CD8-positive, alpha-beta T cell (primary cell): ENCODE measurements at regions of chr7 and their contacts with region 1.

Region 1: DNA sequence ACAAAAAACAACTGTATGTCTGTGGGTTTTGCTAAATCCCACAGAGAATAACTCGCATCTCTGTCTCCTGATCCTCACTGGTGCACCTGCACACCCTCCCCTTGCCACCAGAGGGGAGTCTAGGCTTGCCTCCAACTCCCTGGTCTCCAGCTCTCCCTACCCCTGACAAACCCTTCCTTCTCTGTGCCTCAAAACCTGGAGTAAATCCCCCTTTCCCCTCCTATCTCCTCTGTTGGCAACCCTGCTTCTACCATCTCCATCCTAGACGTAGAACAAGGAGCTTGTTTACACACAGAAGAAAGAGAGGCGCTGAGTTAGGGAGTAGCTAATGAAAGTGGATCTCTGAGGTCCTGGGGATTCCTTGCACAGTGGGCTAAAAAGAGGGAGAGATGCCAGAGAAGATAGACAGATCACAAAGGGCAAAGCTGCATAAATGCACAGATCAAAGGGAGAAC is 6.0 kb downstream of the MBLAC1 start:
- DNase-seq: peak; percentile 28 to 81 (median 71)
- ATAC-seq: peak; percentile 77
- H3K4me3 ChIP-seq: no peak overlapping the region
- H3K4me3 Mint-ChIP-seq: no peak overlapping the region
- H3K27ac ChIP-seq: no peak overlapping the region
- H3K27ac Mint-ChIP-seq: no peak overlapping the region
- H3K4me1 ChIP-seq: peaks cover 14% of the 10 kb centered on the region
- H3K4me1 Mint-ChIP-seq: peaks cover 16% of the 10 kb centered on the region
- H3K27me3 ChIP-seq: no peaks in the 10 kb centered on the region
- H3K27me3 Mint-ChIP-seq: no peaks in the 10 kb centered on the region
- CTCF ChIP-seq: peak; percentile 87

Region 2: GRCh38 chr7:99910976-99911375 is 221.7 kb before region 1 on chr7:
- CTCF ChIA-PET with region 1: interaction called, 41 read pairs
- POLR2A ChIA-PET with region 1: no interaction called
- intact Hi-C with region 1: loop called in 1 of 2 experiments (anchors 2 kb)
- DNase-seq: no peak
- ATAC-seq: no peak
- H3K4me3 ChIP-seq: no peak overlapping the region
- H3K4me3 Mint-ChIP-seq: no peak overlapping the region
- H3K27ac ChIP-seq: no peak overlapping the region
- H3K27ac Mint-ChIP-seq: no peak overlapping the region
- H3K4me1 ChIP-seq: peaks cover 19% of the 10 kb centered on the region
- H3K4me1 Mint-ChIP-seq: peaks cover 63% of the 10 kb centered on the region
- H3K27me3 ChIP-seq: no peaks in the 10 kb centered on the region
- H3K27me3 Mint-ChIP-seq: no peaks in the 10 kb centered on the region
- CTCF ChIP-seq: no peak

Region 3: GRCh38 chr7:99997545-99998137 is 135.1 kb before region 1 on chr7:
- CTCF ChIA-PET with region 1: interaction called, 48 read pairs
- POLR2A ChIA-PET with region 1: interaction called, 3 read pairs
- intact Hi-C with region 1: loop called (anchors 1 to 2 kb)
- DNase-seq: peak; percentile 51 to 91 (median 74)
- ATAC-seq: peak; percentile 88
- H3K4me3 ChIP-seq: peak overlapping the region; percentile 48 to 54
- H3K4me3 Mint-ChIP-seq: peak overlapping the region; percentile 73
- H3K27ac ChIP-seq: peak overlapping the region; percentile 64 to 82
- H3K27ac Mint-ChIP-seq: peak overlapping the region; percentile 92
- H3K4me1 ChIP-seq: peaks cover 12% of the 10 kb centered on the region
- H3K4me1 Mint-ChIP-seq: peaks cover 11% of the 10 kb centered on the region
- H3K27me3 ChIP-seq: no peaks in the 10 kb centered on the region
- H3K27me3 Mint-ChIP-seq: no peaks in the 10 kb centered on the region
- CTCF ChIP-seq: no peak

Region 4: GRCh38 chr7:100107125-100107737 is 25.5 kb before region 1 on chr7:
- CTCF ChIA-PET with region 1: interaction called, 18 read pairs
- POLR2A ChIA-PET with region 1: interaction called, 3 read pairs
- intact Hi-C with region 1: no loop called
- DNase-seq: no peak
- ATAC-seq: no peak
- H3K4me3 ChIP-seq: no peak overlapping the region
- H3K4me3 Mint-ChIP-seq: no peak overlapping the region
- H3K27ac ChIP-seq: no peak overlapping the region
- H3K27ac Mint-ChIP-seq: no peak overlapping the region
- H3K4me1 ChIP-seq: peaks cover 3% of the 10 kb centered on the region
- H3K4me1 Mint-ChIP-seq: peaks cover 6% of the 10 kb centered on the region
- H3K27me3 ChIP-seq: no peaks in the 10 kb centered on the region
- H3K27me3 Mint-ChIP-seq: no peaks in the 10 kb centered on the region
- CTCF ChIP-seq: no peak

Region 5: DNA sequence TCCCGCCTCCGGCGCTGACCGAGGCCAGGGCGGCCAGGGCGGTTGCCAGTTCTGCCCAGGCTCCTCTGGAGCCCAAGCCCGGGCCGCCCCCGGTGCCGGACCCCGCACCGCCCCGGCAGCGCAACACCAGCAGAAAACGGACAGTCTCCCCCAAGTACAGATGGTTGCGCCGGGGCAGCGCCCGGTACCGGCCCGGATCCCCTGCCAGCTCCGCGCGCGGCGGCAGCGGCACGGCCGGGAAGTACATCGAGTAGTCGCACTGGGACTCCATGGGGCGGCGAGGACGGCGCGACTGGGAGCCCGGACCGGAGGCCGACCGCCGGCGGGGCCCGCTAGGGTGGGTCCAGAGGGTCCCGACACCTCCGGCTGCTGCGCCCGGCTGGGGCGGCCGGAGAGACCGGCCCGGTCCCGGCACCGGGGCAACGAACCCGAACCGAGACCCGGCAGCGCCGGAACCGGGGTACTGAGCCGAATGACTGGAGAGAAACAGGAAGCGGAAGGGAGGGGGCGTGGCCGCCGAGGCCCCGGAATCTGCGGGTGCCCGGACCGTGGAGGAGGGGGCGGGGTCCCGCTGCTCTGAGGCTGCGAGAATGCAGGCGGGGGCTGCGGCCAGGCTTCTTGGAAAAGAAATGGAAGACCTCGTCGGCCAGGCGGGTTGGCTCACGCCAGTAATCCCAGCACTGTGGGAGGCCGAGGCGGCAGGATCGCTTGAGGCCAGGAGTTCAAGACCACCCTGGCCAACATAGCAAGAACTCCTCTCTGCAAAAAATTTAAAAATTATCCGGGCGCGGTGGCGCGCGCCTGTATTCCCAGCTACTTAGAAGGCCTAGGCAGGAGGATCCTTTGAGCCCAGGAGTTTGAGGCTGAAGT is 25.7 kb after region 1 on chr7 and contains the start of gene TRAPPC14:
- CTCF ChIA-PET with region 1: interaction called, 53 read pairs
- POLR2A ChIA-PET with region 1: interaction called, 4 read pairs
- intact Hi-C with region 1: no loop called
- DNase-seq: peak; percentile 66 to 95 (median 90)
- ATAC-seq: peak; percentile 83
- H3K4me3 ChIP-seq: peak within 1 kb of the TSS; percentile 78 to 90
- H3K4me3 Mint-ChIP-seq: peak within 1 kb of the TSS; percentile 85
- H3K27ac ChIP-seq: peak within 1 kb of the TSS; percentile 57 to 73
- H3K27ac Mint-ChIP-seq: peak within 1 kb of the TSS; percentile 82
- H3K4me1 ChIP-seq: peaks cover 54% of the 10 kb centered on the region
- H3K4me1 Mint-ChIP-seq: peaks cover 54% of the 10 kb centered on the region
- H3K27me3 ChIP-seq: no peaks in the 10 kb centered on the region
- H3K27me3 Mint-ChIP-seq: no peaks in the 10 kb centered on the region
- CTCF ChIP-seq: no peak
- total RNA-seq, gene TRAPPC14: 40.6 to 47.1 TPM

Region 6: GRCh38 chr7:100190048-100190711 is 57.5 kb after region 1 on chr7:
- CTCF ChIA-PET with region 1: interaction called, 39 read pairs
- POLR2A ChIA-PET with region 1: interaction called, 4 read pairs
- intact Hi-C with region 1: no loop called
- DNase-seq: peak in 2 of 9 experiments; percentile 70 to 79
- ATAC-seq: peak; percentile 95
- H3K4me3 ChIP-seq: no peak overlapping the region
- H3K4me3 Mint-ChIP-seq: no peak overlapping the region
- H3K27ac ChIP-seq: no peak overlapping the region
- H3K27ac Mint-ChIP-seq: no peak overlapping the region
- H3K4me1 ChIP-seq: peaks cover 23% of the 10 kb centered on the region
- H3K4me1 Mint-ChIP-seq: peaks cover 36% of the 10 kb centered on the region
- H3K27me3 ChIP-seq: no peaks in the 10 kb centered on the region
- H3K27me3 Mint-ChIP-seq: no peaks in the 10 kb centered on the region
- CTCF ChIP-seq: peak; percentile 56

Region 7: DNA sequence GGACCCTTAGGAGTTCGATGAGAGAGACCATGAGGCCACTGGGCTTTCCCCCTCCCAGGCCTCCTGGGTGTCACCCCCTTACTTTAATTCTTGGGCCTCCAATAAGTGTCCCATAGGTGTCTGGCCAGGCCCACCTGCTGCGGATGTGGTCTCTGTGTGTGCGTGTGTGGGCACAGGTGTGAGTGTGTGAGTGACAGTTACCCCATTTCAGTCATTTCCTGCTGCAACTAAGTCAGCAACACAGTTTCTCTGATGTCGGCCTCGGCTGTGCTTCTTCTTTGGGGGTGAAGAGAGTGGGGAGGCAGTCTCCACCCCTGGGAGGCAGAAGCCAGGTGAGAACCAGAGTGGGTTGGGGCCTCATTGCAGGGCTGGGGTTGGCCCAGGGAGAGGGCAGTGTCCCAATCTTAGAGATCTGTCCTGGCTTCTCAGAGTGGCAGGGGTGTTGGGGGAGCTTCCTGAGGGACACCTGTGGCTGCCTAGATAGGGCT is 88.6 kb after region 1 on chr7:
- CTCF ChIA-PET with region 1: interaction called, 112 read pairs
- POLR2A ChIA-PET with region 1: interaction called, 5 read pairs
- intact Hi-C with region 1: loop called (anchors 1 kb)
- DNase-seq: peak; percentile 75 to 95 (median 86)
- ATAC-seq: peak; percentile 67
- H3K4me3 ChIP-seq: peak overlapping the region; percentile 84 to 88
- H3K4me3 Mint-ChIP-seq: peak overlapping the region; percentile 94
- H3K27ac ChIP-seq: peak overlapping the region; percentile 93 to 98
- H3K27ac Mint-ChIP-seq: peak overlapping the region; percentile 99
- H3K4me1 ChIP-seq: peaks cover 52% of the 10 kb centered on the region
- H3K4me1 Mint-ChIP-seq: peaks cover 62% of the 10 kb centered on the region
- H3K27me3 ChIP-seq: no peaks in the 10 kb centered on the region
- H3K27me3 Mint-ChIP-seq: no peaks in the 10 kb centered on the region
- CTCF ChIP-seq: no peak